RWPE1 (cell line): ENCODE measurements at regions of chr20 and their contacts with region 1.

Region 1: GRCh38 chr20:48489656-48490055 is 338.1 kb downstream of the PREX1 start:
- DNase-seq: no peak
- H3K27ac ChIP-seq: peak overlapping the region; percentile 83
- CTCF ChIP-seq: no peak

Region 2: GRCh38 chr20:48523212-48523941 is 33.7 kb after region 1 on chr20:
- CTCF ChIA-PET with region 1: no interaction called
- POLR2A ChIA-PET with region 1: no interaction called
- DNase-seq: peak; percentile 86
- H3K27ac ChIP-seq: no peak overlapping the region
- CTCF ChIP-seq: no peak

Region 3: DNA sequence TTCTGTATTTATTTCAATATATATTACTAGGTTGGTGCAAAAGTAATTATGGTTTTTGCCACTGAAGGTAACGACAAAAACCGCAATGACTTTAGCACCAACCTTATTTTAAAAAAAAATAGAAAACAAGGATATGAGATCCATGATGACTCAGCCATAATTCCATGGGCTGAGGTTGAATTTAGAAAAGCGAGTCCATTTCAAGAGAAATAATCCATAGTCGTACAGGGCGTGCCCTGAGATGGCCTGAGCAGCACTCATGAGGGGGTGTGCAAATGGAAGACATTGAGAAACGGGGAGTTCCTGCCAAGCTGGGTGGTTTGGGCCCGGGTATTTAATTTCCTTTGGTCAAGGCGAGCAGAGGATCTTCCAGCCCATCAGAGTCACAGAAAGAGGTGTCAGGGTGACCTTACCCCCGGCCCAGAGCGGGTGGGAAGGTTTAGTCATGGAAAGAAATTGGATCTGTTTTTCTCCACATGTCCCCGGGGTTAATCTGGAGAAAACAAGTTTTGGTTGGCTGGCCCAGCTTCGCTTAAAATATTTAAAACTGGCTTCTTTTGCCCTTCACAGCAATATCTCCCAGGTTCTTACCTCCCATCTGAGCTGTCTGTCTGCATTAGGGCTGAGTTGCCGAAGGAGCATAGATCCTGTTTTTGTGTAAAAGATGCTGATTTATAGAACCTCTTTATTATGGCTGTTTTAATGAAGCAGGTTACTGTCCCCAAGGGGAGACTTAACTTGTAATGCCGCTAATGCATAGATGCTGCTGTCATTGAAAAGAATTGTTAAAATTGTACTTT is 82.5 kb after region 1 on chr20:
- CTCF ChIA-PET with region 1: no interaction called
- POLR2A ChIA-PET with region 1: interaction called, 12 read pairs
- DNase-seq: no peak
- H3K27ac ChIP-seq: no peak overlapping the region
- CTCF ChIP-seq: no peak